Activated CD8-positive, alpha-beta T cell treated with anti-CD3 and anti-CD28 coated beads, Interleukin-2, amount 10 ng/mL, durations not matched to agents 7 days and 5 days (primary cell): ENCODE measurements at regions of chr11 and their contacts with region 1.

Region 1: DNA sequence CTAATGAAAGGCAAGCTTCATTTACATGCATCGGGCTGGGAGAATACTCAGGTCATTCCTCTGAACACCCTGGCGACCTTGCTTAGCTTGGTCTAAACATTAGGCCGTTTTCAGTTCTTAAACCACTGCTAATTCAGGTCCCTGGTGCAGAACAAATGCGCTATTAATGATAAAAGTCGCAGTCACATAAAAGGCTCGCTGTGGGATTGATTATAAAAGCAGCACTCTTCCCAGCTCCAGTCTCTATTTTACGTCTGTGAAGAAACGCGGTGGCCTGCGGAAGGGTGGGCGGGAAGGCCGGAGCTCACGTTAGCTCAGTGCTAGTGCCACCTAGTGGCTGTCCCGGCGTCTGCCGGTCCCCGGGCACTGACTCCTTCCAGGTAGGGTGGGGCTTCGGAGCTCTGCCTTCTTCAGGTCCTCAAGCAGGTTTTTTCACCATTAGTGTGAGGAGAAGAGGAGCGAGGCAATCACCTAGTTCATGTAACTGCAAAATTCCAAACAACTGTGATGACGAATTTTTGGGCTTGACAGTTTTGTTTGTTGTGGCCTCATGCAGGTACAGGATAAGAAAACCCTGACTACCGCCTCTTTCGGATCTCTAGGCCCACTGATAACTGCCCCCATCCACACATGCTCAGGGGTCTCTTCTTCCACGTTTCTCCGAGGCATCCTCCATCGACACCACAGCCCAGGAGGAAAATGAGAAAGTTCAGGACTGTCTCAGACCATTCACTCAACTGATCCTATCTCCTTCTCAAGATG is 66.5 kb upstream of the CLMP start:
- DNase-seq: peak; percentile 79
- ATAC-seq: peak; percentile 93
- H3K4me3 Mint-ChIP-seq: no peak overlapping the region
- H3K27ac Mint-ChIP-seq: no peak overlapping the region
- H3K4me1 Mint-ChIP-seq: peaks cover 27% of the 10 kb centered on the region
- H3K27me3 Mint-ChIP-seq: peaks cover 28% of the 10 kb centered on the region

Region 2: GRCh38 chr11:123103326-123103980 is 158.1 kb before region 1 on chr11:
- CTCF ChIA-PET with region 1: interaction called, 45 read pairs
- POLR2A ChIA-PET with region 1: no interaction called
- DNase-seq: peak; percentile 51
- ATAC-seq: peak; percentile 80
- H3K4me3 Mint-ChIP-seq: no peak overlapping the region
- H3K27ac Mint-ChIP-seq: no peak overlapping the region
- H3K4me1 Mint-ChIP-seq: peaks cover 23% of the 10 kb centered on the region
- H3K27me3 Mint-ChIP-seq: peaks cover 6% of the 10 kb centered on the region

Region 3: GRCh38 chr11:123110356-123110755 is 151.2 kb before region 1 on chr11:
- CTCF ChIA-PET with region 1: interaction called, 45 read pairs
- POLR2A ChIA-PET with region 1: no interaction called
- DNase-seq: no peak
- ATAC-seq: no peak
- H3K4me3 Mint-ChIP-seq: no peak overlapping the region
- H3K27ac Mint-ChIP-seq: peak overlapping the region; percentile 17
- H3K4me1 Mint-ChIP-seq: peaks cover 4% of the 10 kb centered on the region
- H3K27me3 Mint-ChIP-seq: peaks cover 13% of the 10 kb centered on the region

Region 4: GRCh38 chr11:123235117-123235655 is 26.3 kb before region 1 on chr11:
- CTCF ChIA-PET with region 1: interaction called, 19 read pairs
- POLR2A ChIA-PET with region 1: interaction called, 3 read pairs
- DNase-seq: peak; percentile 46
- ATAC-seq: no peak
- H3K4me3 Mint-ChIP-seq: no peak overlapping the region
- H3K27ac Mint-ChIP-seq: peak overlapping the region; percentile 14
- H3K4me1 Mint-ChIP-seq: peaks cover 32% of the 10 kb centered on the region
- H3K27me3 Mint-ChIP-seq: peaks cover 9% of the 10 kb centered on the region

Region 5: DNA sequence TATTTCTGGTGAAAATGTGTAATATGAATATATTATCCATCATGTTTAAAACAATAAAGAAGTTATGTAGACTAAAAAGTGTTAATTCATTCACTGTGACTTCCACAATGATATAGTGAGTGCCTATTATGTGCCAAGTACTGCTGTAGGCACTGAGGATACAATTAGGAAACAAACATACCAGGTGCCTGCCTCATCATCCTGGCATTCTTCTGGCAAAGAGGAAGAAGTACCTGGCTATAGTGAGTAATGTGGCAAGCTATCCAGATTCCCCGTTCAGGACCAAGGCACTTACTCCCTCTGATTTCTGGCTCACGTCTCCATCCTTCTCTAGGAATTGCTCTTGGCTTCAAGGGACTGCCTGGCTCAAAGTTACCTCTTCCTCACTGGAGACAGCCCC is 11.0 kb after region 1 on chr11:
- CTCF ChIA-PET with region 1: interaction called, 11 read pairs
- POLR2A ChIA-PET with region 1: no interaction called
- DNase-seq: no peak
- ATAC-seq: no peak
- H3K4me3 Mint-ChIP-seq: no peak overlapping the region
- H3K27ac Mint-ChIP-seq: no peak overlapping the region
- H3K4me1 Mint-ChIP-seq: no peaks in the 10 kb centered on the region
- H3K27me3 Mint-ChIP-seq: peaks cover 4% of the 10 kb centered on the region

Region 6: DNA sequence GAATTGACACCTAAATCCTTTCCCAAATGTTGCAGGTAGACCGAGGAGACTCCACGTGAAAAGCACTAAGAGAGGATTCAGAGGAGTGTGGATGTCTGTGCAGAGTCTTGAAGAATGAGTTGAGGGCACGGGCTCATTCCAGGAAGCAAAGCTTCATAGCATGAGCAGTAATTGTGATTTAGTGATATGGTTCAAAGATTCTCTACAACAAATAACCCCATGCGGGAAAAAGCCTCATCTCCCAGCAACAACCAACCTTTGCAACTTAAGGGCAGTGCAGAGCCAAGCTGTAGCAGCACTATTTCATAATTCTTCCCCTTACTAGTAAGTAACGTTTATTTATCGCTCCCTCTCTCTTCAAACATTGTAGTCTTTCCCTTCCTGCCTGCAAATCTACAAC is 21.1 kb after region 1 on chr11:
- CTCF ChIA-PET with region 1: no interaction called
- POLR2A ChIA-PET with region 1: no interaction called
- DNase-seq: no peak
- ATAC-seq: no peak
- H3K4me3 Mint-ChIP-seq: no peak overlapping the region
- H3K27ac Mint-ChIP-seq: no peak overlapping the region
- H3K4me1 Mint-ChIP-seq: no peaks in the 10 kb centered on the region
- H3K27me3 Mint-ChIP-seq: peaks cover 47% of the 10 kb centered on the region